WTC11 (cell line): ENCODE measurements at regions of chr12 and their contacts with region 1.

Region 1: GRCh38 chr12:57309420-57309819 is 58.4 kb upstream of the STAC3 start:
- DNase-seq: no peak
- ATAC-seq: no peak
- H3K4me3 Mint-ChIP-seq: no peak overlapping the region
- H3K27ac Mint-ChIP-seq: no peak overlapping the region
- H3K4me1 Mint-ChIP-seq: no peaks in the 10 kb centered on the region
- H3K27me3 Mint-ChIP-seq: no peaks in the 10 kb centered on the region
- CTCF ChIP-seq: no peak

Region 2: GRCh38 chr12:57332646-57333312 is 23.4 kb after region 1 on chr12:
- CTCF ChIA-PET with region 1: interaction called, 11 read pairs
- POLR2A ChIA-PET with region 1: no interaction called
- DNase-seq: no peak
- ATAC-seq: no peak
- H3K4me3 Mint-ChIP-seq: no peak overlapping the region
- H3K27ac Mint-ChIP-seq: peak overlapping the region; percentile 48; the same call in 1 of the 2 replicates
- H3K4me1 Mint-ChIP-seq: no peaks in the 10 kb centered on the region
- H3K27me3 Mint-ChIP-seq: no peaks in the 10 kb centered on the region
- CTCF ChIP-seq: no peak

Region 3: GRCh38 chr12:57340104-57340503 is 30.7 kb after region 1 on chr12:
- CTCF ChIA-PET with region 1: interaction called, 12 read pairs
- POLR2A ChIA-PET with region 1: interaction called, 5 read pairs
- DNase-seq: no peak
- ATAC-seq: no peak
- H3K4me3 Mint-ChIP-seq: no peak overlapping the region
- H3K27ac Mint-ChIP-seq: no peak overlapping the region
- H3K4me1 Mint-ChIP-seq: peaks cover 25% of the 10 kb centered on the region
- H3K27me3 Mint-ChIP-seq: no peaks in the 10 kb centered on the region
- CTCF ChIP-seq: no peak

Region 4: DNA sequence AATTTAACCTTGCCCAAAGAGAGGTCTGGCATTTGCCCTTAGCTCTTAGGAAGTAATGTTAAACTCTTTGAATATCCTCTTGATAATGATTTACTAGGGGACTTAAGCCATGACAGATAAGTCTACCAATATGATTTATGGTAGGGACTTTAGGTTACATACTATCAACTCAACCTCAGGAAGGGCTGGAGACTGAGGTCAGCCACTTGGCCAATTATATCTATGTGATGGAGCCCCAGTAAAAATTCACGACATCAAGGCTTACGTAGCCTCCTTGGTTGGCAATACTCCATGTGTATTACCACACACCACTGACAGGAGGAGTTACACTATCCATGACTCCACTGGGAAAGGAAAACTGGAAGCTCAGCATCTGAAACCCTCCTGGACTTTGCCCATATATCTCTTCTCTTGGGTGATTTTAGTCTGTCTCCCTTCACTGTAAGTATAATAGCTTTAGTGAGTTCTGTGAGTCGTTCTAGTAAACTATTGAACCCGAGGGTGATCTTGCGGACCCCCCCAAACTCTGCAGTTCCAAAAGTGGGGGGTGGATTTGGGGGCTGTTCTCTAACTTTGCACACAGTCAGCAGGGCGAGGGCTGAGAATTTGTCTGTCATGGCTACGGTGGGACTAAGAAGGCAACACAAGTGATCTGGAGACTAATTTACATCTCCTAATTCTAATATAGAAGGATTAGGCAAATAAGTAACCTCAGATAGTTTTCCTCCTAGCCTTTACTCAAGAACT is 59.1 kb after region 1 on chr12:
- CTCF ChIA-PET with region 1: interaction called, 11 read pairs
- POLR2A ChIA-PET with region 1: no interaction called
- DNase-seq: no peak
- ATAC-seq: peak; percentile 65
- H3K4me3 Mint-ChIP-seq: no peak overlapping the region
- H3K27ac Mint-ChIP-seq: 0 out of 2 replicates have a peak overlapping the region, but pooled peaks have one; percentile 46
- H3K4me1 Mint-ChIP-seq: no peaks in the 10 kb centered on the region
- H3K27me3 Mint-ChIP-seq: peaks cover 5% of the 10 kb centered on the region
- CTCF ChIP-seq: no peak